ENCODE measurements at regions of chr17 and their contacts with region 1.

Region 1: GRCh38 chr17:57747221-57748017 is 2.3 kb upstream of the CCDC182 start:
- DNase-seq: peak in 1 of 2 donors; percentile 28
- ATAC-seq: peak in 7 of 8 donors; percentile 32 to 75 (median 56)
- H3K4me3 ChIP-seq: no peak overlapping the region
- H3K27ac ChIP-seq: no peak overlapping the region
- H3K4me1 ChIP-seq: peaks cover 0 to 11% (median 0%) of the 10 kb centered on the region in 9 donors
- H3K27me3 ChIP-seq: no peaks in the 10 kb centered on the region
- CTCF ChIP-seq: peak; percentile 42 to 87 (median 77)

Region 2: GRCh38 chr17:57121338-57122042 is 625.9 kb before region 1 on chr17:
- intact Hi-C with region 1: loop called in 1 of 10 experiments (anchors 10 kb)
- DNase-seq: peak in 1 of 2 donors; percentile 29
- ATAC-seq: peak in 5 of 8 donors; percentile 40 to 59 (median 52)
- H3K4me3 ChIP-seq: no peak overlapping the region
- H3K27ac ChIP-seq: peak overlapping the region in 1 of 10 donors; percentile 4
- H3K4me1 ChIP-seq: peaks cover 0 to 14% (median 0%) of the 10 kb centered on the region in 9 donors
- H3K27me3 ChIP-seq: no peaks in the 10 kb centered on the region
- CTCF ChIP-seq: peak in 8 of 9 donors; percentile 17 to 60 (median 48)

Region 3: GRCh38 chr17:57130761-57131461 is 616.5 kb before region 1 on chr17:
- intact Hi-C with region 1: loop called (anchors 2 to 10 kb)
- DNase-seq: peak; percentile 76 to 88
- ATAC-seq: peak; percentile 91 to 96 (median 94)
- H3K4me3 ChIP-seq: peak overlapping the region in 1 of 10 donors; percentile 11
- H3K27ac ChIP-seq: no peak overlapping the region
- H3K4me1 ChIP-seq: peaks cover 0 to 5% (median 0%) of the 10 kb centered on the region in 9 donors
- H3K27me3 ChIP-seq: no peaks in the 10 kb centered on the region
- CTCF ChIP-seq: peak; percentile 80 to 95 (median 91)

Region 4: GRCh38 chr17:57243171-57243948 is 504.1 kb before region 1 on chr17:
- intact Hi-C with region 1: loop called in 8 of 10 experiments (anchors 2 to 10 kb)
- DNase-seq: peak; percentile 63 to 67
- ATAC-seq: peak; percentile 37 to 86 (median 72)
- H3K4me3 ChIP-seq: no peak overlapping the region
- H3K27ac ChIP-seq: peak overlapping the region in 4 of 10 donors; percentile 19 to 37 (median 27)
- H3K4me1 ChIP-seq: peaks cover 0 to 17% (median 13%) of the 10 kb centered on the region in 9 donors
- H3K27me3 ChIP-seq: no peaks in the 10 kb centered on the region
- CTCF ChIP-seq: peak; percentile 97 to 99 (median 98)

Region 5: DNA sequence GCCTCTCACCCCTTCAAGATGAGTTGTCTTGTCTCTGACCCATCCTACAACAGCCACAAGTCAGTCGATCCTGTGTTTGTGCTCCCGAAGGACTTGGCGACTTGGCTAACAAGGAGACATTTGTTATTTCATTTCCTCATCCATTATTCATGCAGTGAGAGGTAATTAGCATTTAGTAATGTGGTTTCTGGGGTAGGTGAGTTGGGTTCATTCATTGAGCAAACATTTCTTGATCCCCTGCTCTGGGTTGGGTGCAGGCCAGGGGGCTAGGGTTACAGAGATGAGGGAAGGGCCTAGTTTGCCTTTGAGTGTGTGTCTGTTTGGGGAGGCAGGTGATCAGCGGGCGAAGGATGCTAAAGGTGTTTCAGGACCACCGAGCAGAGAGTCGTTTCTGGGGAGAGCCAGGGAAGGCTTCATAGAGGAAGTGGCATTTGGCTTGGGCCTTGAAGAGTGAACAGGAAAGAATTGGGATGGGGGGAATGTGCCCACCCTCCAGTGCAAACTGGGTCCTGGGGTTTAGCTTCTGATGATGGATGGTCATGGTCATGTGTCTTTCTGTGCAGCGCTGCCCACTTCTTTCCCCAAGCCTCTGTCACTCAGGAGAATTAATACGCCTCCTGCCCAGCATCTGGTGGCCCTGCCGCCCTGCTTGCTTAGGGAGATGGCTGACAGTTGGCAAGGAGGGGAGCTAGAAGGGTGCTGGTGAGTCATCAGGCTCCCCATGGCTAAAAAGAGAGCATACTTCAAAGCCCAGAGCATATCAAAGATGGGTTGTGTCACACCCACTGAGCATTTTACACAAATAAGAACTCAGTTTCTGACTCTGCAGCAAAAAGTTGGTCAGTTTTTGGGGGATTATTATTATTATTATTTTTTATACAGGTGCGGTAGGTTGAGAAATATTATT is 452.5 kb before region 1 on chr17:
- intact Hi-C with region 1: loop called in 1 of 10 experiments (anchors 10 kb)
- DNase-seq: peak; percentile 35 to 63
- ATAC-seq: peak; percentile 64 to 96 (median 91)
- H3K4me3 ChIP-seq: no peak overlapping the region
- H3K27ac ChIP-seq: peak overlapping the region in 4 of 10 donors; percentile 34 to 60 (median 52)
- H3K4me1 ChIP-seq: peaks cover 4 to 46% (median 18%) of the 10 kb centered on the region in 9 donors
- H3K27me3 ChIP-seq: no peaks in the 10 kb centered on the region
- CTCF ChIP-seq: no peak

Region 6: GRCh38 chr17:57440522-57441485 is 306.6 kb before region 1 on chr17:
- intact Hi-C with region 1: no loop called
- DNase-seq: peak; percentile 72 to 88
- ATAC-seq: peak; percentile 78 to 89 (median 84)
- H3K4me3 ChIP-seq: no peak overlapping the region
- H3K27ac ChIP-seq: peak overlapping the region; percentile 42 to 83 (median 67)
- H3K4me1 ChIP-seq: peaks cover 23 to 91% (median 61%) of the 10 kb centered on the region in 9 donors
- H3K27me3 ChIP-seq: no peaks in the 10 kb centered on the region
- CTCF ChIP-seq: peak in 8 of 9 donors; percentile 30 to 79 (median 64)

Region 7: GRCh38 chr17:57597531-57598453 is 149.6 kb before region 1 on chr17:
- intact Hi-C with region 1: loop called in 7 of 10 experiments (anchors 5 to 10 kb)
- DNase-seq: peak; percentile 57 to 81
- ATAC-seq: peak in 7 of 8 donors; percentile 39 to 80 (median 71)
- H3K4me3 ChIP-seq: no peak overlapping the region
- H3K27ac ChIP-seq: peak overlapping the region in 8 of 10 donors; percentile 5 to 65 (median 58)
- H3K4me1 ChIP-seq: peaks cover 0 to 57% (median 34%) of the 10 kb centered on the region in 9 donors
- H3K27me3 ChIP-seq: no peaks in the 10 kb centered on the region
- CTCF ChIP-seq: peak; percentile 67 to 93 (median 85)

Region 8: DNA sequence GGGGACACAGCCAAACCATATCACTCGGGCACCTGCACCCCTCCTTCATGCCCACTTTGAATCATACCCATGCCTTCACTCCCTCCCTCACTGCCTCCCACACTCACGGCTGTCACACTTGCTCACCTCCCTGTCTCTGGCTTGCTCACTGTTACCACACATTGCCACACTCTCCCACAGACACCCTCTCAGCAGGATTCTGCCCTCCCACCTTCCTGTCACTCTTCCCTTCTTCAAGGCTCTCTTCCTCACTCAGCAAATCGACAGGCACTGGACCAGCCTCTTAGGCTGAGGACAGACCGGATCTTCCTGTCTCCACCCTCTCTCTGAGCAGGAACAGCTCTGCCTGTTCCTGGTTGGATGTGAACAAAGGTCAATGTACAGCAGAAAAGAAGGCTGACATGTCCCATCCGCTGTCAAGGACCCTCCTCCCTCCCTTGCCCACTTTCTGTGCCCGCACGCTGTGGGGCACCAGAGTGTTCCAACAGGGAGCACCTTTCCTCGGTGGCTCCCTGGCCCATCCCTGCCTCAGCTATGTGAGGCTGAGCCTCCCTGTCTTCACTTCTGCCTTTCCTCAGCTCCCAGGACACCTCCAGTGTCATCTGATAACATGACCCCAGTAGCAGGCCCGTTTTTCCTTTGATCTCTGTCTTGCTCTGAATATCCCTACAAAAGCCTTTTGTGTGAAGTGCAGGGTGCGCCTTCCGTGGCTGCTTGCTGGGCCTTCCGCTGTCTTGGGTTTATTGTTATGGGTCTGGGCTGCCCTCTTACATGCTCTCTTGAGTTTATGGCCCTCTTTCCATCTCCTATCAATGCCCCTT is 49.3 kb before region 1 on chr17:
- intact Hi-C with region 1: no loop called
- DNase-seq: no peak
- ATAC-seq: no peak
- H3K4me3 ChIP-seq: no peak overlapping the region
- H3K27ac ChIP-seq: no peak overlapping the region
- H3K4me1 ChIP-seq: peaks cover 0 to 3% (median 0%) of the 10 kb centered on the region in 9 donors
- H3K27me3 ChIP-seq: no peaks in the 10 kb centered on the region
- CTCF ChIP-seq: no peak

Region 9: GRCh38 chr17:57783106-57783742 is 35.8 kb after region 1 on chr17:
- intact Hi-C with region 1: loop called in 1 of 10 experiments (anchors 5 kb)
- DNase-seq: peak; percentile 61 to 78
- ATAC-seq: peak; percentile 66 to 76 (median 72)
- H3K4me3 ChIP-seq: peak overlapping the region in 5 of 10 donors; percentile 8 to 29 (median 12)
- H3K27ac ChIP-seq: peak overlapping the region in 4 of 10 donors; percentile 46 to 67 (median 56)
- H3K4me1 ChIP-seq: peaks cover 6 to 47% (median 24%) of the 10 kb centered on the region in 9 donors
- H3K27me3 ChIP-seq: peaks cover 0 to 7% (median 0%) of the 10 kb centered on the region in 7 donors
- CTCF ChIP-seq: peak; percentile 44 to 92 (median 86)